H1 (cell line): ENCODE measurements at regions of chr5 and their contacts with region 1.

Region 1: GRCh38 chr5:57028161-57028560 is 76.2 kb upstream of the MIER3 start:
- DNase-seq: no peak
- H3K4me3 ChIP-seq: no peak overlapping the region
- H3K27ac ChIP-seq: no peak overlapping the region
- H3K4me1 ChIP-seq: no peaks in the 10 kb centered on the region
- H3K27me3 ChIP-seq: no peaks in the 10 kb centered on the region
- CTCF ChIP-seq: no peak
- EP300 ChIP-seq: no peak
- POLR2A ChIP-seq: no peak
- RAD21 ChIP-seq: no peak

Region 2: GRCh38 chr5:56995596-56995995 is 32.6 kb before region 1 on chr5:
- CTCF ChIA-PET with region 1: interaction called, 11 read pairs
- POLR2A ChIA-PET with region 1: no interaction called
- DNase-seq: no peak
- H3K4me3 ChIP-seq: no peak overlapping the region
- H3K27ac ChIP-seq: no peak overlapping the region
- H3K4me1 ChIP-seq: no peaks in the 10 kb centered on the region
- H3K27me3 ChIP-seq: no peaks in the 10 kb centered on the region
- CTCF ChIP-seq: no peak
- EP300 ChIP-seq: no peak
- POLR2A ChIP-seq: no peak
- RAD21 ChIP-seq: no peak

Region 3: DNA sequence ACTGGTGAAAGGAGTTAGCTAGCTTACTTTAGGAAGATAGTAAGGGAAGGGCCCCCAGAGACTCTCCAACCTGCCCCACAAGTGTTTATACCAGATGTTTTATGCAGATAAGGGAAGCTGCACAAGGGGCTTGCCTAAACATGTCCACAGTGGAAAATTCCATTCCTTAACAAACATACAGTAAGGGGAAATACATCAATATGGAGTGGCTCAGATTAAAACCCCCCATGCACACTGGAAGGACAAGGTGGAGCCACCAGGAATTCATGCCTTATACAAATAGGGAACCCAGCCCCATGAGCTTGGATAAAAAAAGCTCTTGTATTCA is 39.4 kb after region 1 on chr5:
- CTCF ChIA-PET with region 1: no interaction called
- POLR2A ChIA-PET with region 1: no interaction called
- DNase-seq: no peak
- H3K4me3 ChIP-seq: no peak overlapping the region
- H3K27ac ChIP-seq: no peak overlapping the region
- H3K4me1 ChIP-seq: peaks cover 2 to 6% (median 3%) of the 10 kb centered on the region in 4 experiments; a peak in 3 of 7 replicates
- H3K27me3 ChIP-seq: no peaks in the 10 kb centered on the region
- CTCF ChIP-seq: no peak
- EP300 ChIP-seq: no peak
- POLR2A ChIP-seq: no peak
- RAD21 ChIP-seq: no peak